SK-N-SH (cell line): ENCODE measurements at regions of chr22 and their contacts with region 1.

Region 1: DNA sequence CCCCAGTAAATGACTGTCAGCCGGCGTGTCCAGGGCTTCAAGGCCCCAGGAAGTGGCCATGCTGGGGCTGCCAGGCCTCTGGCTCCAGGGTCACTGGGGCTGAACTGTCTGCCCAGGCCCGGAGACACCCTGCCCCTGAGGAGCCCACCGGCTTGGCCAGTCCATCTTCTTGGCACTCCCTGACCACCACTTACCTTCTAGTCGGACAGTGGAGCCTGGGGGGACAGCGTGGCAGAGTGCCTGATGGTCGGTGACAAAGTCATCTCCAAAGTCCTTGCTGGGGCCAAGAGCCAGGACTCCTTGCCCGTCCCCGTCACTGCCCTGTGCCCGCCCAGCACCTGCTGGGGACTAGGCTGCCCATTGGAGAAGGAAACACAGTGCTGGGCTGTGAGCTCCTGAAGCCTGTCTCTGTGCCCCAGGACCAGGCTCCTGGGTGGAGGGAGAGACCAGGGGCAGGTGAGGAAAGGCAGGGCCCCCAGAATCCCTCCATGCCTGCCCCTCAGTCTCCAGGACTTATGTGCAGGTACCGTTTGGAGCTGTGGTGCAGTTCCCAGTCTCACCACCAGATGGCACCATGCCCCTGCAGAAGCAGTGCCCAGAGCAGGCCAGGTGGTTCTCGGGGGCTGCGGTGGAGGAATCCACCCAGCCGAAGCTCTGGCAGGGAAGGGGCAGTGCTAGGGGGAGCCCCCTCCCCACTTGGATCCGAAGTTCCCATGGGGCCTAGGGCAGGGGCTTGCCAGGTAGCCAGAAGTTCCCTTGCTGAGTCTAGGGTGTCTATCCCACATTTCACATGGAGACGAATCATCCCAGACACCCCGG is 6.0 kb upstream of the CCDC188 start:
- DNase-seq: peak; percentile 90
- H3K4me3 ChIP-seq: peak overlapping the region; percentile 49 to 61; a peak in 2 of 4 replicates
- H3K27ac ChIP-seq: peak overlapping the region in 1 of 2 experiments; percentile 74; a peak in 1 of 4 replicates
- H3K4me1 ChIP-seq: peaks cover 0 to 35% of the 10 kb centered on the region in 2 experiments; a peak in 1 of 4 replicates
- H3K27me3 ChIP-seq: no peaks in the 10 kb centered on the region
- CTCF ChIP-seq: peak; percentile 95
- EP300 ChIP-seq: no peak
- RAD21 ChIP-seq: peak; percentile 98

Region 2: GRCh38 chr22:20174785-20175596 is 18.2 kb after region 1 on chr22:
- CTCF ChIA-PET with region 1: interaction called, 13 read pairs
- POLR2A ChIA-PET with region 1: no interaction called
- DNase-seq: no peak
- H3K4me3 ChIP-seq: no peak overlapping the region
- H3K27ac ChIP-seq: no peak overlapping the region
- H3K4me1 ChIP-seq: peaks cover 0 to 3% of the 10 kb centered on the region in 2 experiments; a peak in 1 of 4 replicates
- H3K27me3 ChIP-seq: no peaks in the 10 kb centered on the region; the same call in 1 of the 2 replicates
- CTCF ChIP-seq: peak; percentile 17; the same call in 1 of the 2 replicates
- EP300 ChIP-seq: no peak
- RAD21 ChIP-seq: peak; percentile 24; the same call in 1 of the 2 replicates

Region 3: DNA sequence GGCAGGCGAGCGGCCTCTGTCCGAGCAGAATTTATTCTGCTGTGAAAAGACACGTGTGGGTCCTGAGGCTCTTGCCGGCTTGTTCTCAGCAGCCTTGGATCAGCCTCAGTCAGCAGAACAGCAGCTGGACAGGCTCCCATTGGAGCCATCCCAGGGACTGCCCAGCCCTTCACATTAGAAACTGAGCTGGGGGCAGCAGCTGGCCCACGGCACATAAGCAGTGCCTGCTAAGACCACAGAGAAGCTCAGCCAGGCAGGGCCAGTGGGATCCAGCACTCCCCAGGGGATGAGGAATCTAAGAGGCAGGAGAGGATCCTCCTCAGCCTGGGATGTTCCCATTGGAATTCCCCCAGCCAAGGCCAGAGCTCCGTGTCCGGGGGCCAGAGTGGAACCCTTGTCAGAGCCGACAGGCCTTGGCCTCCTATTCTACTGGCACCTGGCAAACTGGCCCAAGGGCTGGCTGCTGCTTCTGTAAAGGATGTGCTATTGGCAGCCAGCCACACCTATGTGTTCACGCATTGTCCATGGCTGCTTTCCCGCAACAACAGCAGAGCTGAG is 93.1 kb after region 1 on chr22:
- CTCF ChIA-PET with region 1: interaction called, 11 read pairs
- POLR2A ChIA-PET with region 1: interaction called, 3 read pairs
- DNase-seq: no peak
- H3K4me3 ChIP-seq: no peak overlapping the region
- H3K27ac ChIP-seq: peak overlapping the region in 1 of 2 experiments; percentile 83; a peak in 2 of 4 replicates
- H3K4me1 ChIP-seq: peaks cover 0 to 59% of the 10 kb centered on the region in 2 experiments; a peak in 1 of 4 replicates
- H3K27me3 ChIP-seq: no peaks in the 10 kb centered on the region
- CTCF ChIP-seq: no peak
- EP300 ChIP-seq: no peak
- RAD21 ChIP-seq: no peak

Region 4: DNA sequence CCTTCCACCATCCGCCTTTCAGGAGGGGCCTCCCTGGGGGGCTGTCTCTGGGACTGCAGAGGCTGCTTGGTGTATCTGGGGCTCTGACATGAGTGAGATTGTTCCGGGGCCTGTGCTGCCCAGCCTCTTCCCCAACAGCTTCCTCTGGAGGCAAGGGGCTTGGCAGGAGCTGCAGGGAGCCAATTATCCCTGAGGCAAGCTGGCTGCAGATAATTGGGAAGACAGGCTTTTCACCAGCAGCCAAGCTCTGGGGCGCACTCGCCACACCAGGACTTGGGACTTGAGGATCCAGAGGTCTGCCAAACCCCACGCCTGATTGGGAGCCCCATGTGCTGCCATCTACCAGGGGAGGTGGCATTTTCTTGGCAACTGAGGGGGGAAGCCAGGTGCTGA is 126.8 kb after region 1 on chr22:
- CTCF ChIA-PET with region 1: interaction called, 87 read pairs
- POLR2A ChIA-PET with region 1: interaction called, 6 read pairs
- DNase-seq: peak; percentile 52
- H3K4me3 ChIP-seq: no peak overlapping the region
- H3K27ac ChIP-seq: no peak overlapping the region
- H3K4me1 ChIP-seq: peaks cover 0 to 7% of the 10 kb centered on the region in 2 experiments; a peak in 1 of 4 replicates
- H3K27me3 ChIP-seq: no peaks in the 10 kb centered on the region
- CTCF ChIP-seq: no peak
- EP300 ChIP-seq: no peak
- RAD21 ChIP-seq: no peak

Region 5: DNA sequence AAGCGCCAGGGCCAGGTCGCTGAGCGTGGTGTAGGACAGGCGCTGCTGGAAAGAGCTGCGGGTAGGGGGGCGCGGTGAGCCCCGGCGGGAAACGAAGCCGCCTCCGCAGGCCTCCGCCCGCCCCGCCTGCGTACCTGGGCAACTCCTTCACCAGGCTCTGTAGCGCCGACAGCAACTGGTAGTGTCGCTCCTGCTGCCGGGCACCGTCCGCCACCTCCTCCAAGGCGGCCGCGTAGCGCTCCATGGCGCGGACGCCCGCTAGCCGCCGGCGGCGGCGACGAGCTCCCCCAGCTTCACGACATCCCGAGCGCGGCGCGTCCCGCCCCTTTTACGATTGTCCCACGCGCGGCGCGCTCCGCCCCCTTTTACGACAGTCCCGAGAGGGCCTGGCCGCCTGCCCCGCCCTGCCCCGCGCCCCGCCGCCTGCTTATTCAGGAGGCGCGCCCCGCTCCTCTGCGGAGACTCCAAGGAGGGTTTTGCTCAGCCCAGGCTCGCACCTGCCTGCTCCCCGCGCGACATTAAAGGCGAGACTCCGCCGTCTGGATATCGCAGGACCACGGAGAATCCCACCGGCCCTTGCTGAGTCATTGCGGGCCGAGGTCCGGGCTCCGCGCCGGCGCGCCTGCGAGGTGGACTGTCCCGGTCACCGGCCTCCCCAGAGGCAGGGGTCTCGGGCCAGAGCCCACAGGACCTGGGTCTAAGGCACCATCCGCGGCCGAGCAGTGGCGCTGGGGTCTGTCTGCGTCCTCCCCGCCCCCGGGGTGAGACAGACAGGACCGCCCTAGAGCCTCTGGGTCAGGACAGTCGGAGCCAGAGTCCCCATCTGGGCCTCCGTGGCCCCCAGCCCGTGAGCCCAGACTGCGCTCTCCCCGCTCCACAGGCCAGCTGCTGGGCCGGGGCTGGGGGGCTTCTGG is 163.2 kb after region 1 on chr22 and contains the start of gene DGCR6L:
- CTCF ChIA-PET with region 1: interaction called, 10 read pairs
- POLR2A ChIA-PET with region 1: no interaction called
- DNase-seq: peak; percentile 98
- H3K4me3 ChIP-seq: peak within 1 kb of the TSS; percentile 89 to 94
- H3K27ac ChIP-seq: peak within 1 kb of the TSS; percentile 70 to 88
- H3K4me1 ChIP-seq: peaks cover 15 to 22% of the 10 kb centered on the region in 2 experiments; a peak in 3 of 4 replicates
- H3K27me3 ChIP-seq: no peaks in the 10 kb centered on the region
- CTCF ChIP-seq: no peak
- EP300 ChIP-seq: no peak
- RAD21 ChIP-seq: no peak
- polyA plus RNA-seq, gene DGCR6L: 53.9 and 59.8 TPM in 2 replicates